ENCODE measurements at regions of chr1 and their contacts with region 1.

Region 1: GRCh38 chr1:184754476-184755225 is at the start of gene EDEM3:
- DNase-seq: peak; percentile 99
- H3K4me3 Mint-ChIP-seq: peak within 1 kb of the TSS; percentile 93
- H3K27ac Mint-ChIP-seq: peak within 1 kb of the TSS; percentile 93
- H3K4me1 Mint-ChIP-seq: peaks cover 38% of the 10 kb centered on the region
- H3K27me3 Mint-ChIP-seq: peaks cover 2% of the 10 kb centered on the region
- total RNA-seq, gene EDEM3: 14.5 to 15.2 TPM

Region 2: DNA sequence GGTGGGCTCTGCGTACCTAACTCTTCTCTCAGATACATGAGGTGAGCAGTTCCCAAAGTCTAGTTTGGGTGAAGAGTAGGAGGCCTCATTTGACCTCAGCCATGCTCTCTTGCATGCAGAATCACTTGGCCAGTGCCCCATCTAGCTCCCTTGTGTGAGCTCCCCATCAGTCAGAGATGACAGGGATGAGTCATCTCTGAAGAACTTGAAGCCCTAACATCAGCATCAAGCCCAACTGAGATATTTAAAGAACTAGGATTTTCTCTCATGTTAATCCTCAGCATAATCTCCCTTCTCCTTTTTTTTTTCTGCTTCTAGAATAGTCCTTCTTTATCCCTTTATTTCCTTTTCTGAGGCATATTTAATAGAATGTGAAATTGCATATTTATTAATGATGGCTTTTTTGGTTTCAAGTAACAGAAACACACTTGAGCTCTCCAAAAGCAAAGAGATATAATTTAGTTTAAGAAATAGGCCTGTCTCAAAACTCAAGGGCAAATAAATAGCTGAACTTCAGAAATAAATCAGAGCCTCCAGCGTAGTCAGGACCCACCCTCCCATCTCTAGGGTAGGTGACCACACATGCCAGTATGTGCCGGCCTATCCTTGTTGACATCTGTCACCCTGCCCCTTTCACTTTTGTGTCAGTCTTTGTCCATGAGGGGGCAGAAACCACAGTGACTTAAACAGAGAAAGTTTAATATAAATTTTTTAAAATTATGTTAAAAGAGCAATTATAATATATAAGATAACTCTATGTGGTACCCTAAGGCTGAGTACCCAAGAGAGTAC is 590.8 kb before region 1 on chr1:
- CTCF ChIA-PET with region 1: no interaction called
- POLR2A ChIA-PET with region 1: interaction called, 3 read pairs
- intact Hi-C with region 1: loop called (anchors 2 kb)
- DNase-seq: peak; percentile 31
- H3K4me3 Mint-ChIP-seq: no peak overlapping the region
- H3K27ac Mint-ChIP-seq: no peak overlapping the region
- H3K4me1 Mint-ChIP-seq: peaks cover 14% of the 10 kb centered on the region
- H3K27me3 Mint-ChIP-seq: peaks cover 1% of the 10 kb centered on the region

Region 3: GRCh38 chr1:184604152-184604900 is 150.3 kb before region 1 on chr1:
- CTCF ChIA-PET with region 1: no interaction called
- POLR2A ChIA-PET with region 1: no interaction called
- intact Hi-C with region 1: no loop called
- DNase-seq: no peak
- H3K4me3 Mint-ChIP-seq: no peak overlapping the region
- H3K27ac Mint-ChIP-seq: no peak overlapping the region
- H3K4me1 Mint-ChIP-seq: no peaks in the 10 kb centered on the region
- H3K27me3 Mint-ChIP-seq: no peaks in the 10 kb centered on the region

Region 4: DNA sequence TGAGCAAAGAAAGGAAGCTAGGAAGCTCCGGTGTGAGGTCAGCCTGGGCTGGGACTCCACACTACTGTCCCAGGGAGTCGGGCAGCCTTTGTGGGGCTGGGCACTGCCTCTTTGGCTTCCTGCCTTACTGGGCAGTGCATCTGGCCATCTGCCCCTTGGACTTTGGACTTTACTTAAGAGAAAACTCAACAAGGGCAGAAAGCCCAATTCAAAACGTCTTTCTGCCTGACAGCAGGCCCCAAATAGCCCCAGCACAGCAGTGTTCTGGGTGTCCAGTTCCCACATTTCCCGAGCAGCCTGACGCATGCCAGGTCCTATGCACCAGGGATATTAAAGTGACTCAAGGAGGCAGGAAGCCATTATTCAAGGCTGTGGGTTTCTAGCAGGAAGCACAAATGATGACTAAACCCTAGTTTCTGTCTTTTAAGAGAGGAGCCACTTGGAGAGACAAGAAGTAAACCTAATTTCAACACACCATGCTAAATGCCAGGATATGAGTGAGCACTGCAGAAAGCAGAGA is 37.9 kb after region 1 on chr1:
- CTCF ChIA-PET with region 1: no interaction called
- POLR2A ChIA-PET with region 1: no interaction called
- intact Hi-C with region 1: loop called (anchors 5 kb)
- DNase-seq: peak; percentile 30
- H3K4me3 Mint-ChIP-seq: no peak overlapping the region
- H3K27ac Mint-ChIP-seq: no peak overlapping the region
- H3K4me1 Mint-ChIP-seq: peaks cover 9% of the 10 kb centered on the region
- H3K27me3 Mint-ChIP-seq: no peaks in the 10 kb centered on the region

Region 5: DNA sequence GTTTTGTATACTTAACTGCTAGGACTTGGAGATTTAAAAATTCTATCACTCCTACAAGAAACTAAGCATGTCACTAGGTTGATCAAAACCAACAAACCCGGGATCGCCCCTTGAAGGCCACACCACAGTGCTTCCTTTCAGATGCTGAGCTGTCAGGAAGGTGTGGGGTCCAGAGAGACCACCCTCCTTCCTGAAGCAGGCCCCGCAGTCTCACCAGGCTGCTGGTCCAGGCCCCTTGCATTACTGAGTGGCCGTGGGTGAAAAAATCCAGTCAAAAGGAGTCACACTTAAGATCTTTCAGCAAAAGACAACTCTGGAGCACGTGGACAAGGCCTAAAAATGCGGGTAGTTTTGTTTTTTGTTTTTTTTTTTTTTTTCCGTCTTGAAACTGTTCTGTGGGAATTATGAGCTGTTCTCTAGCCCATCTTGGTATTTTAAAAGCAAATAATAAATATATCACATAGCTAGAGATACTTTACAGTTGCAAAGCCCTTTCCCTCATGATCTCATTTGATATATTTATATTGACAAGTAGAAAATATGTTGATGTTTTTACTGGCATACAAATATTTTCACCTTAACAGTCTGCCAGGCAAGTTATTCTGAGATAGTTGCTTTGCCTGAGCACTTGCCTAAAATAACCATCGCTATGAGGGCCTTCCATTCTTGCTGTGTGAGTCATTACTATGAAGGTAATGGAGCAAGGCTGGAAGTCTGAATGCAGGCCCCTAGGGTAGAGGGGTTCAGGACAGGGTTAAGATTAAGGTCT is 73.1 kb after region 1 on chr1:
- CTCF ChIA-PET with region 1: no interaction called
- POLR2A ChIA-PET with region 1: no interaction called
- intact Hi-C with region 1: no loop called
- DNase-seq: no peak
- H3K4me3 Mint-ChIP-seq: no peak overlapping the region
- H3K27ac Mint-ChIP-seq: no peak overlapping the region
- H3K4me1 Mint-ChIP-seq: peaks cover 7% of the 10 kb centered on the region
- H3K27me3 Mint-ChIP-seq: no peaks in the 10 kb centered on the region

Region 6: DNA sequence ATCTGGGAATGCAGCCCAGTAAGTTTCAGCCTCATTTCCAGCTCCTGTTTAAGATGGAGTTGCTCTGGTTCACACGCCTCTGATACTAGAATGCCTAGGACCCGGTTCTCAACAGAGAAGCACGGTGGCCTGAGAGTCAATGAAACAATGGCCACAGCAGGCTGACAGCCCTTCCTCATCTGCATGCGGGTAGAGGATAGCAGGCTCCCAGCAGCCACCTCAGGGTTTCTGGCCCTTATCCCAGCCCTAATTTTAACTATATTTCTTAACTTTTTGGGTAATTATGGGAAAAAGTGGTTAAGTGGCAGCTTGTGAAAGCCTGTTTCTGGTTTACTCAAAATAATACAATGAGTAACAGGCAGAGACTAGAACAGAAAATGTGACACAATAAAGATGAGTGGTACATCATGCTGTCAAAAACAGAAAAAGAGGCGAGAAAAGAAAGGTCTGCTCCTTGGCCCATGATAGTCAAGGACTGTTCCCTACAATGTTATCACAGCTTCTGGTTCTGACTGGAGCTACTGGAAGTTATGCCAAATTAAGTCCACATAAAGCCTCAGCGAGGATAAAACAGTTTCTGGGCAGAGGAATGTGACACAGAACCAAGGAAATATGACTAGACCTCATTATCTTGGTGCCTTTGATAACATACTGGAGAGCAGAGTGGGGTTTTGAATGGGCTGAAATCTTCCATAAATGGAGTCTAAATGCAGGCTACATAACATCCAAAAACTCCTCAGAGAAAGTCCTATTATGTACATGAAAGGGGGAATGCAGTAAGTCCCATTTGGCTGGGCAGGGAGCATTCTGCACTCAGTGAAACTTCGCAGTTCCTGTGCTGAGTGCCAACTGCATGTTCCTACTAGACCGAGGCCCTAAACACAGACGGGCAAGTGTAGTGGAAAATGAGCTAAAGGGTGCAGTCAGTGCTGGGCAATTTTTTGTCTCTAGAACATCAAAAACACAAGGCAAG is 127.6 kb after region 1 on chr1:
- CTCF ChIA-PET with region 1: no interaction called
- POLR2A ChIA-PET with region 1: no interaction called
- intact Hi-C with region 1: loop called (anchors 1 kb)
- DNase-seq: peak; percentile 48
- H3K4me3 Mint-ChIP-seq: peak overlapping the region; percentile 13
- H3K27ac Mint-ChIP-seq: peak overlapping the region; percentile 92
- H3K4me1 Mint-ChIP-seq: peaks cover 33% of the 10 kb centered on the region
- H3K27me3 Mint-ChIP-seq: peaks cover 2% of the 10 kb centered on the region

Region 7: DNA sequence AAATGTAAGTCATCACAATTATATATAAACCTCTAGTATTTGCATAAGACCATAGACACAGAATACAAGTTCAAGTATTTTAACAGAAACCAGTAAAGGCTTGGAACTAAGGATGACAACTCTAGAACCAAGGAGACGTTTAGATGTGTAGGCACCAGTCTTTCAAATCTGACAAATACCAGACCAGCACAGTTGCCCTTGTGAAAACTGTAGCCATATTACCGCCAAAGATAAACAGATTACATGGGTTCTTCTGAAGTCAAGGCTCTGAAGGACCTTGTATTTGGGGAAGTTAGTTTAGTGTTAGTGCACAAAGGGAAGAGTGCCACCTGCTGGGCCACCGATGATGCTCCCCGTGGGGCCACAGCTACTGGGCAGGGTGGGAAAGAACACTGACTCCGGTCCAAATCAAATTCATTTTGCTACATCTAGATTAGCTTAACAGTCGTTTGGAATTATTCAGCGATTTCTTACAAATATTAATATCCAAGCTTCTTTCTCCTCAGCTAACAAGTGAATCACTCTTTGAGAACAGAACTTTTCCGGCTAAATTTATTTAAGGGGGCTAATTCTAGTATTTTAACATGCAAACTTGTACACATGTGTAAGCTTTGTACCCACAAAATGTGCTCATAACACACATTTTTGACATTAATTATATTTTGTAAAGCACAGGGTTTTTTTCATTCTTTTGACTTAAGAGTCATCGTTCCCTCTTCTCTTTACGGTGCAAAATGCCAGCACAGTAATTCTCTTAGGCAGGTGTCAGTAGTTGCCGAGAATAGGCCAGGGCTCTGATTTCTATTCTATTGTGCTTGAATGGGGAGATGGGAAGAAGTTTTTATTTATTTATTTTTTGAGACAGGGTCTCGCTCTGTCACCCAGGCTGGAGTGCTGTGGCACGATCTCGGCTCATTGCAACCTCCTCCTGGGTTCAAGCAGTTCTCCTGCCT is 227.6 kb after region 1 on chr1:
- CTCF ChIA-PET with region 1: interaction called, 11 read pairs
- POLR2A ChIA-PET with region 1: no interaction called
- intact Hi-C with region 1: no loop called
- DNase-seq: peak; percentile 85
- H3K4me3 Mint-ChIP-seq: no peak overlapping the region
- H3K27ac Mint-ChIP-seq: no peak overlapping the region
- H3K4me1 Mint-ChIP-seq: no peaks in the 10 kb centered on the region
- H3K27me3 Mint-ChIP-seq: peaks cover 4% of the 10 kb centered on the region

Region 8: DNA sequence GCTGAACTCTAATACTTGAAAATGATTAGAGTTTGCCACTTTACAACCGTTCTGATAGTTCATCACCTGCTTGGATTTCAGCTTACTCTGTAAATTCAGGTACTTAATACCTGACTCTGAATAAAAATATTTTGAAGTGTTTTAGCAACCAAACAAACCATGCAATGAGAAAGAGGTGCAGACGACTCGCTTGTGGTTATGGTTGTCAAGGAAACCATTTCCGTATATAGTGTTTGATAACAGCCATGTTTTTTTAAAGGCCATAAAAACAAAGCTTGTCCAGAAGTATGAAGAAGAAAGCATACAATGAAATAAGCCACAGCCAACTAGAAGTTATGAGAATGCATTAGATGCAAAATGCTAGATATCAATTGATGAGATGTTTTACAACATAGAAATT is 812.3 kb after region 1 on chr1:
- CTCF ChIA-PET with region 1: no interaction called
- POLR2A ChIA-PET with region 1: no interaction called
- intact Hi-C with region 1: loop called (anchors 5 kb)
- DNase-seq: peak; percentile 57
- H3K4me3 Mint-ChIP-seq: no peak overlapping the region
- H3K27ac Mint-ChIP-seq: peak overlapping the region; percentile 74
- H3K4me1 Mint-ChIP-seq: peaks cover 62% of the 10 kb centered on the region
- H3K27me3 Mint-ChIP-seq: no peaks in the 10 kb centered on the region

Measured in activated CD4-positive, alpha-beta memory T cell treated with anti-CD3 and anti-CD28 coated beads for 36 hours (primary cell).